CD8-positive, alpha-beta T cell (primary cell): ENCODE measurements at regions of chr19 and their contacts with region 1.

Region 1: GRCh38 chr19:39480337-39481228 is at the start of gene TIMM50:
- DNase-seq: peak; percentile 94 to 98 (median 97)
- ATAC-seq: peak; percentile 98
- H3K4me3 ChIP-seq: peak within 1 kb of the TSS; percentile 85 to 98
- H3K4me3 Mint-ChIP-seq: peak within 1 kb of the TSS; percentile 91
- H3K27ac ChIP-seq: peak within 1 kb of the TSS; percentile 82
- H3K27ac Mint-ChIP-seq: peak within 1 kb of the TSS; percentile 90
- H3K4me1 ChIP-seq: peaks cover 15% of the 10 kb centered on the region
- H3K4me1 Mint-ChIP-seq: peaks cover 27% of the 10 kb centered on the region
- H3K27me3 ChIP-seq: no peaks in the 10 kb centered on the region
- H3K27me3 Mint-ChIP-seq: no peaks in the 10 kb centered on the region
- CTCF ChIP-seq: no peak
- total RNA-seq, gene TIMM50: 48.6 to 56.7 TPM

Region 2: GRCh38 chr19:39390755-39391592 is 89.6 kb before region 1 on chr19 and contains the starts of genes MED29 and PAF1:
- CTCF ChIA-PET with region 1: no interaction called
- POLR2A ChIA-PET with region 1: no interaction called
- intact Hi-C with region 1: loop called (anchors 1 kb)
- DNase-seq: peak; percentile 89 to 100 (median 94)
- ATAC-seq: peak; percentile 87
- H3K4me3 ChIP-seq: peak within 1 kb of the TSS; percentile 86 to 95
- H3K4me3 Mint-ChIP-seq: peak within 1 kb of the TSS; percentile 96
- H3K27ac ChIP-seq: peak within 1 kb of the TSS; percentile 99
- H3K27ac Mint-ChIP-seq: peak within 1 kb of the TSS; percentile 100
- H3K4me1 ChIP-seq: peaks cover 19% of the 10 kb centered on the region
- H3K4me1 Mint-ChIP-seq: peaks cover 37% of the 10 kb centered on the region
- H3K27me3 ChIP-seq: no peaks in the 10 kb centered on the region
- H3K27me3 Mint-ChIP-seq: no peaks in the 10 kb centered on the region
- CTCF ChIP-seq: no peak
- total RNA-seq, gene MED29: 45.9 to 55.1 TPM
- total RNA-seq, gene PAF1: 109 to 117 TPM

Region 3: GRCh38 chr19:39502640-39503417 is 22.2 kb after region 1 on chr19:
- CTCF ChIA-PET with region 1: interaction called, 5 read pairs
- POLR2A ChIA-PET with region 1: no interaction called
- intact Hi-C with region 1: loop called in 1 of 2 experiments (anchors 1 kb)
- DNase-seq: peak; percentile 51 to 91 (median 78)
- ATAC-seq: peak; percentile 79
- H3K4me3 ChIP-seq: no peak overlapping the region
- H3K4me3 Mint-ChIP-seq: no peak overlapping the region
- H3K27ac ChIP-seq: no peak overlapping the region
- H3K27ac Mint-ChIP-seq: no peak overlapping the region
- H3K4me1 ChIP-seq: peaks cover 27% of the 10 kb centered on the region
- H3K4me1 Mint-ChIP-seq: peaks cover 26% of the 10 kb centered on the region
- H3K27me3 ChIP-seq: peaks cover 23 to 50% of the 10 kb centered on the region in 2 experiments
- H3K27me3 Mint-ChIP-seq: peaks cover 57% of the 10 kb centered on the region
- CTCF ChIP-seq: peak; percentile 89

Region 4: DNA sequence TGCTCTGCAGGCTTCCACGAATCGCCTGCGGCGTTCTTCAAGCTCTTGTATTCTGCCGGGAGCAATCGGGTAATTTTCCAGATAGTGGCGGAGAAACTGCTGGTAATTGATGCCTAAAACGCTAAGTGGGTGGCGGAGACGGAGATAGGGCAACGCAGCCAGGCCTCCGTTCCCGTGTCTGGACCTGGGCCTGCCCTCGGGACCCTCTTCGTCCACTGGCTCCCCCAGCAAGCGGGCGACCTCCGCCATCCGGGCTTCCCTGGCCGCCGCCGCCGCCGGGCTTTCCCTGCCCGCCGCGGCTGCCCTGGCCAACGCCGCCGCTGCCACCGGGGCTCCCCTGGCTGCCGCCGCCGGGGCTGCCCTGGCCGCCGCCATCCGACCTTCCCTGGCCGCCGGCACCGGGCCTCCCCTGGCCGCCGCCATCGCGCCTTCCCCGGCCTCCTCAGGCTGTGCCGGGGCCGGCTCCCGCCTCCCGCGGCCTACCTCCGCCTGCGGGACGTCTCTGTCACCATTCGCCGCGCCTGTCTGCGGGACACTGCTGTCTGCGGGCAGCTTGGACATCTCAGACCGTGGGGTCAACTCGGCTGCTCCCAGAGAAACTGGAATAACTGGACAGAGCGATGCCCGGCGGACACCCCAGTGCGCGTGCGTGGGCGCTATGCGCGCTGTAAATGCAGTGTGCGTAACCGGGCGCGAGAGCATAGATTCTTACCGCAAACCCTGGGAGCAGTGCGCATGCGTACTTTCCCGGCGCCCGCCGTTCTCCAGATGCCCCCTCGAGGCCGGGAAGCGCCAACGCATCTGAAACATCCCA is 59.1 kb after region 1 on chr19 and contains the start of gene EID2:
- CTCF ChIA-PET with region 1: interaction called, 36 read pairs
- POLR2A ChIA-PET with region 1: no interaction called
- intact Hi-C with region 1: loop called in 1 of 2 experiments (anchors 1 kb)
- DNase-seq: peak; percentile 84 to 97 (median 95)
- ATAC-seq: peak; percentile 91
- H3K4me3 ChIP-seq: peak within 1 kb of the TSS; percentile 81 to 95
- H3K4me3 Mint-ChIP-seq: peak within 1 kb of the TSS; percentile 97
- H3K27ac ChIP-seq: peak within 1 kb of the TSS; percentile 90 to 93
- H3K27ac Mint-ChIP-seq: peak within 1 kb of the TSS; percentile 98
- H3K4me1 ChIP-seq: peaks cover 31% of the 10 kb centered on the region
- H3K4me1 Mint-ChIP-seq: peaks cover 58% of the 10 kb centered on the region
- H3K27me3 ChIP-seq: no peaks in the 10 kb centered on the region
- H3K27me3 Mint-ChIP-seq: no peaks in the 10 kb centered on the region
- CTCF ChIP-seq: peak; percentile 74
- total RNA-seq, gene EID2: 16.3 to 17.7 TPM